ENCODE measurements at regions of chr20 and their contacts with region 1.

Region 1: DNA sequence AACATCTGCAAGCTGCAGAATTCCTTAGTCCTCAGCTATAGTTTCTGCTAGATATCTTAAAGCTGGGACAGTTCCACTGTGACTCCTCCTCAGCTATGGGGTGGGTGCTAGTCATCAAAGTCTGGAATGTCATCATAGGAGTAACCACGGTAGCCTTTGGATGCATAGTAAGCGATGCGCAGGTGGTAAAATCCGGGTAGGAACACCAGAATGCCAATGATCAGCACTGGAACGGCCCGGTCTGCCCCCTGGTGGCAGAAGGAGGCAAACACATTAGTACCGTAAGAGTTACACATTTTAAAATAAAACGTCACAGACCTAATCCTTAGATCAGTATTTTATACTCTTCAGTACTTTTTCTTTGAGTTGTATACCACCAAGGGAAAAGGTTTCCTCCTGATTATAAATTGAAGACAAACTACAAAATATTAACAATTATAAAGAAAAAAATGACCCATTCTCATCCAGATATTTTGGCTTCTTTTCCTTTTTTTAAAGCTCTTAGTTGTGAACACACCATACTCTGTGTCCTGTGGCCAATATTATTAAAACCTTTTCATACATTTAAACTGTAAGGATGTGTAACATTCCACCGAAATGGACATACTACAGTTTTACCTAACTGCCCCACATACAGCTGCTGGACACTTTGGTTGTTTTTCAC is 18.9 kb downstream of the PCNA start:
- DNase-seq: peak; percentile 50 to 83 (median 70)
- ATAC-seq: peak; percentile 81 to 87
- H3K4me3 Mint-ChIP-seq: no peak overlapping the region
- H3K27ac Mint-ChIP-seq: peak overlapping the region in 9 of 10 donors; percentile 13 to 85 (median 52)
- H3K4me1 Mint-ChIP-seq: peaks cover 8 to 22% (median 13%) of the 10 kb centered on the region in 4 donors
- H3K27me3 Mint-ChIP-seq: no peaks in the 10 kb centered on the region

Region 2: GRCh38 chr20:5033571-5033970 is 67.2 kb before region 1 on chr20:
- POLR2A ChIA-PET with region 1: no interaction called
- DNase-seq: no peak
- ATAC-seq: no peak
- H3K4me3 Mint-ChIP-seq: no peak overlapping the region
- H3K27ac Mint-ChIP-seq: no peak overlapping the region
- H3K4me1 Mint-ChIP-seq: peaks cover 0 to 4% (median 2%) of the 10 kb centered on the region in 4 donors
- H3K27me3 Mint-ChIP-seq: peaks cover 0 to 2% (median 0%) of the 10 kb centered on the region in 5 donors

Region 3: DNA sequence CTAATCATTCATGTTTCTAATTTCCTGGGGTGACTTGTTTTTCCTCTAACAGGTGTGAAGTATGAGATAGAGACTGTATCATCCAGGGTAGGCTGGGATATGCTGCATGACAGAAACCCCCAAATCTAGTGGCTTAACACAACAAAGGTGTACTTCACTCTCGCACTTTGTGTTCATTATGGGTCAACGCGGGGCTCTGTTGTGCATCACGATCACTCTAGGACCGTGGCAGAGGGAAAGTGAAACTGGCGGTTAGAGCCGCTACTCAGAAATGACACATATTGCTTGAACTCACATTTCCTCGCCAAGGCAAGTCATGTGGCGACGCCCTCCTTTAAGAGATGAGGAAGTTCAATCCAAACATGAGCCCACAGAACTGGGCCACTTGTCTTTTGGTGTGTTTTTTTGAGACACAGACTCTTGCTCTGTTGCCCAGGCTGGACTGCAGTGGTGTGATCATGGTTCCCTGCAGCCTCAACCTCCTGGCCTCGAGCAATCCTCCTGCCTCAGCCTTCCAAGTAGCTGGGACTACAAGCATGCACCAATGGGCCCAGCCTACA is 22.3 kb before region 1 on chr20:
- POLR2A ChIA-PET with region 1: no interaction called
- DNase-seq: peak; percentile 18 to 84 (median 70)
- ATAC-seq: peak; percentile 95 to 98
- H3K4me3 Mint-ChIP-seq: peak overlapping the region; percentile 70 to 93 (median 84)
- H3K27ac Mint-ChIP-seq: peak overlapping the region; percentile 93 to 100 (median 98)
- H3K4me1 Mint-ChIP-seq: peaks cover 3 to 47% (median 24%) of the 10 kb centered on the region in 4 donors
- H3K27me3 Mint-ChIP-seq: no peaks in the 10 kb centered on the region

Region 4: GRCh38 chr20:5088688-5089087 is 12.1 kb before region 1 on chr20:
- POLR2A ChIA-PET with region 1: interaction called, 11 read pairs
- DNase-seq: no peak
- ATAC-seq: no peak
- H3K4me3 Mint-ChIP-seq: no peak overlapping the region
- H3K27ac Mint-ChIP-seq: peak overlapping the region in 5 of 10 donors; percentile 11 to 89 (median 52)
- H3K4me1 Mint-ChIP-seq: peaks cover 9 to 26% (median 18%) of the 10 kb centered on the region in 4 donors
- H3K27me3 Mint-ChIP-seq: no peaks in the 10 kb centered on the region